HCT116 (cell line): ENCODE measurements at regions of chr11 and their contacts with region 1.

Region 1: DNA sequence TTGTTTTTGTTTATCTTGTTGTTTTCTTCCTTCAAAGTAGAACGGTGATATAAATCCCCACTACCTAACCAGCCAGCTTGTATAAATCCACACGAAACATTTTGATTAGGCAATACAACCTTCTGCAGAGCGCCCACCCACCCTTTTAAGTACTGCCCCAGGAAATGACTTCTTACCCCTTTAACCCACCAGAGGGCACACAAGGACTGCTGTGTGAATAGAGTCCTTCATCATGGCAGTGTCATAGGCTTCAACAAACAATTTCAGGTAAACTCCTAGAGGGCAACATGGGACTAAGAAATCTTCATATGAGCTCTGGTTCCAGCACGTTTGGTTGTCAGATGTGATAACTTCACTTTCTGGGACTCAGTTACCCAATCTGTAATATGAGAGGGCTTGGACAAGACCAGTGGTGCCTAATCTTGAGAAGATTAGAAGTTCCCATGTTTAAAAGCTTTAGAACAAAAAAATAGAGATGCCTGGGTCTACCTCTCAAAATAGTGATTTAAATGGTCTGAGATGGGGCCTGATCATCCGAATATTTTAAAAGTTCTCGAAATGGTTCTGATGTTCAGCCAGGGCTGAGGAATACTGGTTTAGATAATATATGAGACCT is 56.1 kb downstream of the PIWIL4 start:
- DNase-seq: peak; percentile 88
- ATAC-seq: peak; percentile 99
- H3K4me3 ChIP-seq: no peak overlapping the region
- H3K27ac ChIP-seq: no peak overlapping the region
- H3K4me1 ChIP-seq: no peaks in the 10 kb centered on the region
- H3K27me3 ChIP-seq: no peaks in the 10 kb centered on the region
- CTCF ChIP-seq: peak; percentile 71 to 99 (median 90)
- POLR2A ChIP-seq: no peak
- RAD21 ChIP-seq: peak; percentile 99

Region 2: DNA sequence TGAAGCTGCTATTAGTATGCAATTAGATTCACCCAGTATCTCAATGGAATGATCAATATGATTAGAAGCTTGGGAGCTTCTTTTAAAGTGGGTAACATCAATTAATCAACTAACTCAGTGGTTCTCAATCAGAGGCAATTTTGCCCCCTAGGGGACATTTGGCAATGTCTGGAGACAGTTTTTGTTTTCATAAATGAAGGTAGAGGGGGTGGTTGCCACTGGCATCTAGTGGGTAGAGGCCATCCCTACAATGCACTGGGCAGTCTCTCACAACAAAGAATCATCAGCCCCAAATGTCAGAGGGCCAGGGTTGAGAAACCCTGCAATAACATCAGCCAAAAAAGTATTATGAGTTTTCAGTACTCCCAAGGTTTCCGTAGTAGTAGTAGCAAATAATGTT is 139.0 kb after region 1 on chr11:
- CTCF ChIA-PET with region 1: interaction called, 35 read pairs
- POLR2A ChIA-PET with region 1: no interaction called
- RAD21 ChIA-PET with region 1: interaction called, 8 to 12 read pairs
- intact Hi-C with region 1: loop called (anchors 1 kb)
- DNase-seq: peak; percentile 34
- ATAC-seq: peak; percentile 96
- H3K4me3 ChIP-seq: no peak overlapping the region
- H3K27ac ChIP-seq: no peak overlapping the region
- H3K4me1 ChIP-seq: no peaks in the 10 kb centered on the region
- H3K27me3 ChIP-seq: no peaks in the 10 kb centered on the region
- CTCF ChIP-seq: peak; percentile 73 to 98 (median 74)
- POLR2A ChIP-seq: no peak
- RAD21 ChIP-seq: peak; percentile 89

Region 3: GRCh38 chr11:94973099-94973968 is 350.1 kb after region 1 on chr11 and contains the starts of genes CWC15 and KDM4D:
- CTCF ChIA-PET with region 1: interaction called, 15 read pairs
- POLR2A ChIA-PET with region 1: no interaction called
- RAD21 ChIA-PET with region 1: no interaction called
- intact Hi-C with region 1: loop called (anchors 1 kb)
- DNase-seq: peak; percentile 84
- ATAC-seq: peak; percentile 99
- H3K4me3 ChIP-seq: peak within 1 kb of the TSS; percentile 75 to 82
- H3K27ac ChIP-seq: peak within 1 kb of the TSS; percentile 51
- H3K4me1 ChIP-seq: peaks cover 7 to 14% of the 10 kb centered on the region in 2 experiments; a peak in 3 of 4 replicates
- H3K27me3 ChIP-seq: no peaks in the 10 kb centered on the region
- CTCF ChIP-seq: no peak
- POLR2A ChIP-seq: peak; percentile 88
- RAD21 ChIP-seq: no peak
- total RNA-seq, gene CWC15: 47.6 TPM
- total RNA-seq, gene KDM4D: 2.1 TPM

Region 4: GRCh38 chr11:95138448-95138847 is 515.2 kb after region 1 on chr11:
- CTCF ChIA-PET with region 1: no interaction called
- POLR2A ChIA-PET with region 1: no interaction called
- RAD21 ChIA-PET with region 1: no interaction called
- intact Hi-C with region 1: loop called (anchors 5 kb)
- DNase-seq: no peak
- ATAC-seq: peak; percentile 83
- H3K4me3 ChIP-seq: no peak overlapping the region
- H3K27ac ChIP-seq: no peak overlapping the region
- H3K4me1 ChIP-seq: peaks cover 9 to 14% of the 10 kb centered on the region in 2 experiments; a peak in 2 of 4 replicates
- H3K27me3 ChIP-seq: no peaks in the 10 kb centered on the region
- CTCF ChIP-seq: peak; percentile 19 to 62 (median 36); a peak in 2 of 6 replicates
- POLR2A ChIP-seq: no peak
- RAD21 ChIP-seq: peak; percentile 77

Region 5: DNA sequence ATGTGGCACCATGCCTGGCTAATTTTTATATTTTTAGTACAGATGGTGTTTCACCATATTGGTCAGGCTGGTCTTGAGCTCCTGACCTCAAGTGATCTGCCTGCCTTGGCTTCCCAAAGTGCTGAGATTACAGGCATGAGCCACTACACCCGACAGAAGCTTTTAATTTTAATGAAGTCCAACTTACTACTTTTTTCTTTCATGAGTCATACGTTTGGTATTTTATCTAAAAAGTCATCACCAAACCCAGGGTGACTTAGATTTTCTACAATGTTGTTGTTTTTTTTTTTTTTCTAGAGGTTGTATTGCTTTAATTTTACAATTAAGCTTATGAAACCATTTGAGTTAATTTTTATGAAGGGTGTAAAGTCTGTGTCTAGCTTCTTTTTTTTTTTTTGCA is 1801.5 kb after region 1 on chr11:
- CTCF ChIA-PET with region 1: no interaction called
- POLR2A ChIA-PET with region 1: no interaction called
- RAD21 ChIA-PET with region 1: no interaction called
- intact Hi-C with region 1: loop called (anchors 2 kb)
- DNase-seq: no peak
- ATAC-seq: no peak
- H3K4me3 ChIP-seq: no peak overlapping the region
- H3K27ac ChIP-seq: no peak overlapping the region
- H3K4me1 ChIP-seq: 0 out of 4 replicates have a peak, but pooled peaks cover 0 to 3% of the 10 kb centered on the region in 2 experiments
- H3K27me3 ChIP-seq: no peaks in the 10 kb centered on the region
- CTCF ChIP-seq: no peak
- POLR2A ChIP-seq: no peak
- RAD21 ChIP-seq: no peak